ENCODE measurements at regions of chr5 and their contacts with region 1.

Region 1: DNA sequence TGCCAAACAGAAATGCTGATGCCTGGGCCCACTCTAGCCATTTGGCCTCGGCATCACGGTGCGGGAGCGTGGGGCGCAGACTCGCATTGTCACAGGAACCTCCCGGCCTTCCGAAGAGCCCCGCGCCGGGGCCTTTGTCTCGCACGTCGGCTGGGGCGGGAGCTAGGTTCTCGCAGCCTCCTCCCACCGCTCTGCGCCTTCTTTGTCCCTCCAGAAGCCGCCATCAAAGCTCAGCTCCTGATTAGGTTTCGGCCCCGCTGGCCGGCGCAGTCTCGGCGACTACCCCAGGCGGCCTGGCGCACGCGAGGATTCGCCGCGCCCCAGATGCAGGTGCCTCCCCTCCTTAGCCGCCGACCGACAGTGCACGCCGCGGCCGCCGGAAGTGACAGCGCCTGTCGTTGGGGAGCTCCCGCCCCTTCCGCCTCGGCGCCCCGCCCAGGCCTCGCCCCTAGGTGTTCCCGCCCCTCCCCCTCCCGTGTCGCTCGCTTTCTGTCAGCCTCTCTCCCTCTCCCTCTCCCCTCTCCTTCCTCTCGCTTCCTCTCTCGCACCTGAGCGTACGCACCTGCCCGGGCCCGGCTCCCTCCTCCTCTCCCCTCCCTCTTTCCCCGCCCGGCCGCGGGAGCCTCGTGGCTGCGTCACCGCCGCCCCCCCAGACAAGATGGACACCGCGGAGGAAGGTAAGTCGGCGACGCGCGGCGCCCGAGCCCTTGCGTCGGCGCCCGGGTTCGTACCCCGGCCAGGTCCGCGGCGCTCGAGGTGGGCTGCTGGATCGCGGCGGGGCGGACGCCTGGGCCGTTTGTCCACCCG is at the start of gene MARCHF6:
- DNase-seq: peak; percentile 93
- H3K4me3 ChIP-seq: peak within 1 kb of the TSS; percentile 78
- H3K27ac ChIP-seq: peak within 1 kb of the TSS; percentile 97
- H3K4me1 ChIP-seq: peaks cover 13% of the 10 kb centered on the region
- H3K27me3 ChIP-seq: no peaks in the 10 kb centered on the region
- CTCF ChIP-seq: no peak
- total RNA-seq, gene MARCHF6: 129 and 144 TPM in 2 replicates

Region 2: GRCh38 chr5:10249948-10250803 is 103.3 kb before region 1 on chr5 and contains the start of gene CCT5:
- CTCF ChIA-PET with region 1: no interaction called
- POLR2A ChIA-PET with region 1: no interaction called
- intact Hi-C with region 1: loop called (anchors 5 kb)
- DNase-seq: peak; percentile 98
- H3K4me3 ChIP-seq: peak within 1 kb of the TSS; percentile 88
- H3K27ac ChIP-seq: peak within 1 kb of the TSS; percentile 100
- H3K4me1 ChIP-seq: peaks cover 14% of the 10 kb centered on the region
- H3K27me3 ChIP-seq: no peaks in the 10 kb centered on the region
- CTCF ChIP-seq: no peak
- total RNA-seq, gene CCT5: 651 and 675 TPM in 2 replicates

Region 3: GRCh38 chr5:11322133-11322532 is 968.7 kb after region 1 on chr5:
- CTCF ChIA-PET with region 1: no interaction called
- POLR2A ChIA-PET with region 1: no interaction called
- intact Hi-C with region 1: no loop called
- DNase-seq: no peak
- H3K4me3 ChIP-seq: no peak overlapping the region
- H3K27ac ChIP-seq: no peak overlapping the region
- H3K4me1 ChIP-seq: no peaks in the 10 kb centered on the region
- H3K27me3 ChIP-seq: no peaks in the 10 kb centered on the region
- CTCF ChIP-seq: no peak

Measured in A673 (cell line).